Left cardiac atrium (tissue), 4 donors: ENCODE measurements at regions of chr4 and their contacts with region 1.

Region 1: DNA sequence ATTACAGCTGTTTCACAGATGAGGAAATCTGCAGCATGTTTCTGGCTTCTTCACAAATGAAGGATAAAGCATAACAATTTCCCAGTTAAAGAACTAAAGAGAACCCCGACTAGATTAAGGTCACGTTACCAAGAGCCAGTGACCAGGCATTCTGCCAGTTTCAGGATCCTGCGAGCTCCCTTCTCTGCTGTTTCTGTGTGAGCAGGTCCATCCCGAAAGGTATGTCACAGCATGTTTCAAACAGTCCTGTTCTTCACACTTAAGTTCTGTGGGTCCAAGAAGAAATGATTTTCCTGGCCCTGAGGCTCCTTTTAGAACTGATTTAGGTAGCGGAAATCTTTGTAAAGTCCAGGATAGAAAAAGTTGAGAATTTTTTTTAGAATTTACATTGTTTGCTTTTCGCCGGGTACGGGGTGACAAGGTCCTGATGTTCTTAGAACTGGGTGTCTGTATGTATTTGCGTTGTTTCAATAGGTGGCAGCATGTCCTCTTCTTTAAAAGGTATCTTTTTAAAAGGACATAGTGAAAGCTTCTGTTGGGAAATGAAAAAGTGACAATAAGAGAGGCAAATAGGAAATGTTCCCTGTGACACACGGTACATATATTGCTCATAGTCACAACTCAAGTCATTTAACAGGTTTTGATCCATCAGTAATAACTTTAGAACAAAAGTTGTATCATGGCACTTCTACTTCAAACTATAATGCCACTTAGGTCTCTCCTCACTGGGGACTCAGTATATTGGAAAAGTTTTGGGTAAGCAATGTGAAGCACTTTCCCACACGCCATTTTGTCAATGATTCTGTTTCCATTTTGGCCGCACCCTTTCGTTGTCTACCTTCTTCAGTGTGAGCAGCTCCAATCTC is 18.4 kb downstream of the IL21 start:
- DNase-seq: no peak
- ATAC-seq: peak; percentile 55 to 63

Region 2: GRCh38 chr4:122716825-122717448 is 114.4 kb after region 1 on chr4:
- intact Hi-C with region 1: loop called (anchors 2 to 10 kb)
- DNase-seq: peak; percentile 73
- ATAC-seq: peak; percentile 77 to 82

Region 3: GRCh38 chr4:122930862-122931261 is 328.4 kb after region 1 on chr4:
- intact Hi-C with region 1: loop called in 1 of 2 experiments (anchors 5 kb)
- DNase-seq: no peak
- ATAC-seq: no peak